Activated CD4-positive, alpha-beta T cell treated with anti-CD3 and anti-CD28 coated beads for 36 hours (primary cell): ENCODE measurements at regions of chr19 and their contacts with region 1.

Region 1: GRCh38 chr19:41238244-41238643 is 19.2 kb downstream of the AXL start:
- DNase-seq: no peak
- ATAC-seq: no peak
- H3K4me3 Mint-ChIP-seq: no peak overlapping the region
- H3K27ac Mint-ChIP-seq: no peak overlapping the region
- H3K4me1 Mint-ChIP-seq: no peaks in the 10 kb centered on the region
- H3K27me3 Mint-ChIP-seq: no peaks in the 10 kb centered on the region

Region 2: GRCh38 chr19:40502647-40503319 is 735.5 kb before region 1 on chr19:
- CTCF ChIA-PET with region 1: no interaction called
- POLR2A ChIA-PET with region 1: no interaction called
- intact Hi-C with region 1: loop called in 1 of 2 experiments (anchors 5 kb)
- DNase-seq: no peak
- ATAC-seq: no peak
- H3K4me3 Mint-ChIP-seq: no peak overlapping the region
- H3K27ac Mint-ChIP-seq: no peak overlapping the region
- H3K4me1 Mint-ChIP-seq: no peaks in the 10 kb centered on the region
- H3K27me3 Mint-ChIP-seq: no peaks in the 10 kb centered on the region